Calu3 (cell line): ENCODE measurements at regions of chr10 and their contacts with region 1.

Region 1: DNA sequence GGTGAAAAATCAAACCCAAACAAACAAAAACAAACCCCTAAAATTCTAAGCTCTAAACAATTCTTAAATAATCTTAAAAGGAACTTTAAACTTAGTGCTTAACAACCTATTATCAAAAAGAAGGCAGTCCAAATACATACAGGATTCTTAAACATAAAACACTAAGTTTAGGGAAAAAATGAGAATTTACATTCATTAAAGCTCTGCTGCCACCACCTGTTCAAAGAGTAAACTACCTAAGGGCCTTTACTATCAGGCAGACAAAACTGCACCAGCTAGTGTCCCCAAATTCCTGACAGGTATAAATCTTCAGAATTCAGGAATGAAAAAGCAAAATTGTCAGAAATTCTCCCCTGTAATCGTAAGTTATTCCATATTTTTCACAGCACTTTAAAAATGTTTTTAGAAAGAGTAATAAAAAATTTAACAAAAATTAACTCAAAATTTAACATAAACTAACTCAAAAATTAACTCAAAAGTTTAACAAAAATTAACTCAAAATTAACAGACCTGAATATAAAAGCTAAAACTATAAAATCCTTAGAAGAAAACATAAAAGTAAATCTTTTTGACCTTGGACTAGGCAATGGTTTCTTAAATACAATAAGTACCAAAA is 55.1 kb downstream of the PDZD8 start:
- DNase-seq: peak; percentile 3
- H3K4me3 Mint-ChIP-seq: no peak overlapping the region
- H3K27ac Mint-ChIP-seq: no peak overlapping the region
- H3K4me1 Mint-ChIP-seq: peaks cover 10% of the 10 kb centered on the region
- H3K27me3 Mint-ChIP-seq: no peaks in the 10 kb centered on the region
- CTCF ChIP-seq: peak; percentile 37

Region 2: DNA sequence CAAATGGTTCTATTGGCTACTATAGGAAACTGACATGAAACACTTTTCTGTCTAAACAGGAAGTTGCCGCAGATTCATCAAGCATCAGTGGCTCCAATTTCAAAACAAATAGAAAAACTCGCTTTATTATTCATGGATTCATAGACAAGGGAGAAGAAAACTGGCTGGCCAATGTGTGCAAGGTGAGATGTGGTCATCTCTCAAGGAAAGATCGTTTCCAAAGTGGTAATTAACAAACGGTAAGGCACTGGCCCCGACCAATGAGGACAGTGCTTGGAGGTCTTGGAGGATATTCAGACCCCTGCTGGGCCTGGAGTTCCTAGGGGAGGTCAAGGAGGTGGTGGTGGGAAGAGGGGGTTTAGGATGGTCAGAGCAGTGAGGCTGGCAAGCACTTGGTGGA is 771.9 kb before region 1 on chr10:
- CTCF ChIA-PET with region 1: no interaction called
- intact Hi-C with region 1: no loop called
- DNase-seq: no peak
- H3K4me3 Mint-ChIP-seq: no peak overlapping the region
- H3K27ac Mint-ChIP-seq: no peak overlapping the region
- H3K4me1 Mint-ChIP-seq: no peaks in the 10 kb centered on the region
- H3K27me3 Mint-ChIP-seq: peaks cover 17% of the 10 kb centered on the region
- CTCF ChIP-seq: no peak

Region 3: GRCh38 chr10:117216611-117217195 is 103.5 kb before region 1 on chr10:
- CTCF ChIA-PET with region 1: interaction called, 21 read pairs
- intact Hi-C with region 1: loop called (anchors 5 kb)
- DNase-seq: peak; percentile 75
- H3K4me3 Mint-ChIP-seq: peak overlapping the region; percentile 73
- H3K27ac Mint-ChIP-seq: no peak overlapping the region
- H3K4me1 Mint-ChIP-seq: peaks cover 9% of the 10 kb centered on the region
- H3K27me3 Mint-ChIP-seq: peaks cover 41% of the 10 kb centered on the region
- CTCF ChIP-seq: peak; percentile 99

Region 4: DNA sequence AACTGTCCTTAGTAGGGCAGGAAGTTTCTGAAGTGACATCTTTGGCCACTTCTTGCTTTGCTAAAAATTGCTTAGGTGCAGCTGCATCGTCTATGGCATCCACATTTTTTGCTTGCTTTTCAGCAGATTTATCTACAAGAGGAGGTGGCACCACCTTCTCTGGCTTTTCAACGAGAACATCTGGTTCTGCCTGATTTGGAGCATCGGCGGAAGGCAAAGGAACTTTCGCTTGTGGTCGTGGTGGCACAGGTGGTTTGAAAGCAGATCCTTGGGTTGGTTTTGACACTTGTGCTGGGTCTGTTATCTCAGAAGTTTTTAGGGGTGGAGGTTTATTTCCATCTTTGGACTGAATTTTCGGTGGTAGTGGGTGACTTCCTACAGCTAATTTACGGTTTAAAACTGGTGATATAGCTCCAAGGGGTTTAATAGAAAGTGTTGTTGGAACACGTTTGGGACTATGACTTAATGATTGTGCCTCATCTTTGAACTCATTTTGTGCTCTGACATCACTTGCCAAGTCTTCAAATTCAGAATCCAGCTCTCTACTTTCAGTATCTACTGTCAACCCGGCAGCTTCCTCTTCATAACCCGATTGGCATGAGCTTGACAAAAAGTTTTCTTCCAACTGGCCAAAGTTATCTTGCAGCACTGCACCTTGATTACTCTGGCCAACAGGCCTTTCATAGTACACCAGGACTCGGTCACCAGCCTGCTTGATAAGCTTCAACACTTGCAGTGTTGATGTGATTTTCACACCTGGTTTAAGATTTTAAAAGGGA is 35.3 kb before region 1 on chr10:
- CTCF ChIA-PET with region 1: no interaction called
- intact Hi-C with region 1: loop called (anchors 5 kb)
- DNase-seq: no peak
- H3K4me3 Mint-ChIP-seq: no peak overlapping the region
- H3K27ac Mint-ChIP-seq: no peak overlapping the region
- H3K4me1 Mint-ChIP-seq: no peaks in the 10 kb centered on the region
- H3K27me3 Mint-ChIP-seq: no peaks in the 10 kb centered on the region
- CTCF ChIP-seq: no peak

Region 5: GRCh38 chr10:117363028-117363427 is 42.9 kb after region 1 on chr10:
- CTCF ChIA-PET with region 1: interaction called, 3 read pairs
- intact Hi-C with region 1: loop called (anchors 5 kb)
- DNase-seq: no peak
- H3K4me3 Mint-ChIP-seq: no peak overlapping the region
- H3K27ac Mint-ChIP-seq: peak overlapping the region; percentile 92
- H3K4me1 Mint-ChIP-seq: peaks cover 49% of the 10 kb centered on the region
- H3K27me3 Mint-ChIP-seq: no peaks in the 10 kb centered on the region
- CTCF ChIP-seq: no peak